Endothelial cell of umbilical vein (primary cell): ENCODE measurements at regions of chr7 and their contacts with region 1.

Region 1: GRCh38 chr7:98106647-98107445 is at the start of gene LMTK2:
- DNase-seq: peak; percentile 95
- H3K4me3 ChIP-seq: peak within 1 kb of the TSS; percentile 70 to 86 (median 80)
- H3K27ac ChIP-seq: peak within 1 kb of the TSS; percentile 68
- H3K4me1 ChIP-seq: peaks cover 32% of the 10 kb centered on the region
- H3K27me3 ChIP-seq: no peaks in the 10 kb centered on the region
- CTCF ChIP-seq: peak; percentile 87 to 96
- POLR2A ChIP-seq: peak; percentile 83
- total RNA-seq, gene LMTK2: 13.8 and 16.6 TPM in 2 replicates

Region 2: GRCh38 chr7:98119256-98119918 is 12.5 kb after region 1 on chr7:
- CTCF ChIA-PET with region 1: interaction called, 16 read pairs
- POLR2A ChIA-PET with region 1: interaction called, 6 read pairs
- dilution Hi-C with region 1: no loop called
- intact Hi-C with region 1: no loop called
- DNase-seq: no peak
- H3K4me3 ChIP-seq: no peak overlapping the region
- H3K27ac ChIP-seq: no peak overlapping the region
- H3K4me1 ChIP-seq: peaks cover 3% of the 10 kb centered on the region
- H3K27me3 ChIP-seq: no peaks in the 10 kb centered on the region
- CTCF ChIP-seq: no peak
- POLR2A ChIP-seq: no peak

Region 3: DNA sequence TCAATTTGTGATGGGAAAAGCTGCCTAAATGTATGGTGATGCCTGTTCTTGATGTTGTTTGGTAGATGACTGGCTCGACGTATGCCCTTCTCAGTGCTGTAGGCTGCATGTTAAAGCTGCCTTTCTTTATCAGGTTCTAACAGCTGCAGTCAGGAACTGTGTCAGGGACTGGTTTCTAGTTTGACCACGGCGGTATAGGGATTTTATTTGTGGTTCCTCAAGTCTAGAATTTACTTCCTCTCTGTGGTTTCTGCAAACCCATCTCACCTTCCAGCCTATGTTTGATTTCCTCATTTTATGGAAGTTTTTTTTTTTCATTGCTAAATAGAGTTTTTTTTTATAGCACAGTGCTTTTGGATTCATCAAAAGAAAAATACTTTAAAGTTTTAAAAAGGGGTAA is 26.3 kb after region 1 on chr7:
- CTCF ChIA-PET with region 1: interaction called, 29 read pairs
- POLR2A ChIA-PET with region 1: interaction called, 3 read pairs
- dilution Hi-C with region 1: no loop called
- intact Hi-C with region 1: loop called (anchors 1 kb)
- DNase-seq: no peak
- H3K4me3 ChIP-seq: no peak overlapping the region
- H3K27ac ChIP-seq: no peak overlapping the region
- H3K4me1 ChIP-seq: peaks cover 30% of the 10 kb centered on the region
- H3K27me3 ChIP-seq: no peaks in the 10 kb centered on the region
- CTCF ChIP-seq: no peak
- POLR2A ChIP-seq: no peak

Region 4: DNA sequence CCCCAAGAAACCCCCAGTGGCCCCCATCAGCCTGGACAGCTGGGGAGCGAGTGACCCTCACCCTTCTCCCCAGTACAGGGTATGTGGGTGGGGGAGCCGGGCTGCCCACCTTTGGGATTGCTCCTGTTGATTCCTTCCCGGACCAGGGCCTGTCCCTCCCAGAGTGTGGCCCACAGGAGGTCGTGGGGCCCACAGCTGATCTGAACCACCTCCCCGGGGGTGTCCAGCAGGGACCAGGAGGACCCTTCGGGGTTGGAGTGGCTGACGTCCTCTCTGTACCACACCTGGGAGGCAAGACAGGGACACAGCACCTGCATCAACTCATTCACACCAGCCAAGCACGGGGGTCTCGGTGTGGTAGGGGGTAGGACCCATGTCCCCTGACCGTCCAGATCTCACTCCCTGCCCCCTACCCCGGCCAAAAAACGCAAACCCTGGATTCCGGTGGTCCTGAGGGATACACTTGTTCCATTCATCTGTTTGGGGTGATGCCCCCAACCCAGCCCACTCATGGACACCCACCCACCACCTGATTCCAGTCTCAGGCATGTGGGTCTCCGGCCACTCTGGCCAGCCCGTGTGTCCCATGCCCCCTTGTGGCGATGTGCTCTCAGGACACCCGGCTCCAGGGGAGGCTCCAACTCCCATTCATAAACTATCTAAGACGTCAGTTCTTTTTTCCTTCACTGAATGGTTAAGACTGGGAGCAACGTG is 134.3 kb after region 1 on chr7:
- CTCF ChIA-PET with region 1: no interaction called
- POLR2A ChIA-PET with region 1: no interaction called
- dilution Hi-C with region 1: no loop called
- intact Hi-C with region 1: loop called (anchors 1 kb)
- DNase-seq: peak; percentile 54
- H3K4me3 ChIP-seq: no peak overlapping the region
- H3K27ac ChIP-seq: no peak overlapping the region
- H3K4me1 ChIP-seq: peaks cover 12% of the 10 kb centered on the region
- H3K27me3 ChIP-seq: no peaks in the 10 kb centered on the region
- CTCF ChIP-seq: peak; percentile 86 to 93
- POLR2A ChIP-seq: no peak

Region 5: DNA sequence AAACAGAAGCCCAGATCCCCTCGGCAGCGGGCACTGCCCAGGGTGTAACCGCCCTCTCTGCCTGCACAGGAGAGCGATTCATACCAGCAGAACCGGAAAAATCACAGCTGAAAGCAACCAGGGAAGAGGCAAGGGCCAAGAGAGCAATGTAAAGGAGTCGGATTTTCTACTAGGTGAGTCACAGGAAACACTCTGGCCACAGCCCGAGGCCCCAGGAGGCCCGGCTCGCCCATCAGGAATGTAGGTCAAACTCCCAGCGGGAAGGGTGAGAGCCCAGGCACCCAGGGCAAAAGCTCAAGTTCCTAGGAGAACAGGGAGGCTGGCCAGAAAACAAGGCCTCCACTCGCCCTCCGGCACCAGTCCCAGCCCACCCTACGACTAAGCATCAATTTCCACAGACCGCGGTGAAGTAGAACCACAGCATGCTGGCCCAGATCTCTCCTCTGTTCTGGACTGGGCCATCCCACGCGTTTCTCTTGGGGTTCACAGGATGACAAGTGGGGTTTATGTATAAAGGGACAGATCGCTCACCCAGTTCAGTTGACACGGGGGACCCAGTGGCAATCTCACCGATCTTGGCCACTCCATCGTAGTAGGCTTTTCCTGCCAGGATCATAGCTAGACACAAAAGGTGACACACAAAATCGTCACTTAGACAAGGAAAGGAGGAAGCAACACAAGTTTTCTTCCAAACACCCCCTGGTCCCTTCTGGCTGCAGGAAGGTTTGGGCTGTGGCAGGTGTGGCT is 247.8 kb after region 1 on chr7:
- CTCF ChIA-PET with region 1: no interaction called
- POLR2A ChIA-PET with region 1: no interaction called
- dilution Hi-C with region 1: no loop called
- intact Hi-C with region 1: loop called (anchors 1 kb)
- DNase-seq: peak; percentile 68
- H3K4me3 ChIP-seq: no peak overlapping the region
- H3K27ac ChIP-seq: peak overlapping the region; percentile 14
- H3K4me1 ChIP-seq: peaks cover 19% of the 10 kb centered on the region
- H3K27me3 ChIP-seq: no peaks in the 10 kb centered on the region
- CTCF ChIP-seq: no peak
- POLR2A ChIP-seq: no peak